Activated B cell treated with CpG ODN at 0.5 μM for 24 hours (primary cell): ENCODE measurements at regions of chr7 and their contacts with region 1.

Region 1: GRCh38 chr7:50119815-50120637 is 27.0 kb upstream of the ZPBP start:
- DNase-seq: no peak
- ATAC-seq: peak; percentile 86
- H3K4me3 Mint-ChIP-seq: no peak overlapping the region
- H3K27ac Mint-ChIP-seq: peak overlapping the region; percentile 43
- H3K4me1 Mint-ChIP-seq: peaks cover 21% of the 10 kb centered on the region
- H3K27me3 Mint-ChIP-seq: no peaks in the 10 kb centered on the region
- CTCF ChIP-seq: no peak

Region 2: DNA sequence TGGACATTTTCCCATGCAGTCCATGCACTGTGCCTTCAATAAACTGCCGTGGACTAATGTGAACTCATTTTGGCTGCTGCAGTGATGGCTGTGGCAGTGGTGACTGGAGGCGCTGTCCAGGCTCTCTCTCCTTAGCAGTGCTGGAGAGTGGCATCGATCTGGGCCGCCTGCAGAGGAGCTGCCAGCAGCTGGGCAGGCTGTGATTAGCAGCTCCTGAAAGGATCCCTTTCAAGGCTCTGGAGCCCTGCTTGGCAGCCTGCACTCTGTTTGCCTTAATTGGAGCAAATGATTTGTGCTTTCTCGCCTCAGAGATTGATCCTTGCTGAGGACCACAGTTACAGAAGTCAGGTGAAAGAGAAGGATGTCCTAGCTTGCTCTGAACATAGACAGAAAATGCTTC is 476.7 kb before region 1 on chr7:
- CTCF ChIA-PET with region 1: no interaction called
- POLR2A ChIA-PET with region 1: no interaction called
- intact Hi-C with region 1: no loop called
- DNase-seq: no peak
- ATAC-seq: no peak
- H3K4me3 Mint-ChIP-seq: no peak overlapping the region
- H3K27ac Mint-ChIP-seq: no peak overlapping the region
- H3K4me1 Mint-ChIP-seq: no peaks in the 10 kb centered on the region
- H3K27me3 Mint-ChIP-seq: no peaks in the 10 kb centered on the region
- CTCF ChIP-seq: no peak

Region 3: DNA sequence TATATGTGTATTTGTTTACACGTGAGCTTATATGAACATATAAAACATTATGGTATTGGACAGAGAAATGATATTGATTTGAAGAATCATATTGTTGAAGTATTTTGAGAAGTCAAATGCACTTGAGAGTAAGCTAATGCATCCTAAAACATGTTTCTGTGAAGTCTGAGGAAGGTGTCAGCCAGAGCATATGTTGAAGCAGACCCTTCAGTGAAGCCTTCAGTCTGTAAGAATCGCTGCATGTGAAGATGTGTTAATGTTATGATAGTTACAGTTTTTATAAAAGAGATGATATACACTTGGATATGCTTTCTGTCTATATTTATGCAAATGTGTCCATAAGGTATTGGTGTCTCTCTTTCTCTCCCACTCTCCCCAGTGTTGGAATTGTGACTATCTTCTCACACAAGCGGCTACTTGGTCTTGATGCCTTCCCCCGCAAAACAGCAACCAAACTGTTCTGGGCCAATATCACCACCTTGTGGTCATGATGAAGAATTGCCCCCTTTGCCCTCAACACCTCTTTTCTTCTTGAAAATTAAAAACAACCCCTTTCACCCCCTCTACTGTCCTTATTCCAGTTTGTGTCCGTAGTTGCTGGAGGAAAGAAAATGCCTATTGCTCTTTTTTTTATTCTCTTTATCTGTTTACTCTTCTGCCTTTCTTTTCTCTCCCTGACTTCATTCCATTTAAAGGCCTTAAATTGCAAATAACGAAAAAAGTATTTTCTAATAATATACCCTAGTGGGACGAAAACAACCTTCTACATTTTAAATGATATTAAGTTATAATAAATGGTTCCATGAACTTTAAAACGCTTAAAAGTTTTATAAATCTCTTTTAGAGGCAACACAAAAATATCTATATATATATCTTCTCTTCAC is 249.4 kb after region 1 on chr7:
- CTCF ChIA-PET with region 1: interaction called, 10 read pairs
- POLR2A ChIA-PET with region 1: no interaction called
- intact Hi-C with region 1: no loop called
- DNase-seq: no peak
- ATAC-seq: peak; percentile 66
- H3K4me3 Mint-ChIP-seq: no peak overlapping the region
- H3K27ac Mint-ChIP-seq: peak overlapping the region; percentile 74
- H3K4me1 Mint-ChIP-seq: peaks cover 94% of the 10 kb centered on the region
- H3K27me3 Mint-ChIP-seq: no peaks in the 10 kb centered on the region
- CTCF ChIP-seq: peak; percentile 50

Region 4: DNA sequence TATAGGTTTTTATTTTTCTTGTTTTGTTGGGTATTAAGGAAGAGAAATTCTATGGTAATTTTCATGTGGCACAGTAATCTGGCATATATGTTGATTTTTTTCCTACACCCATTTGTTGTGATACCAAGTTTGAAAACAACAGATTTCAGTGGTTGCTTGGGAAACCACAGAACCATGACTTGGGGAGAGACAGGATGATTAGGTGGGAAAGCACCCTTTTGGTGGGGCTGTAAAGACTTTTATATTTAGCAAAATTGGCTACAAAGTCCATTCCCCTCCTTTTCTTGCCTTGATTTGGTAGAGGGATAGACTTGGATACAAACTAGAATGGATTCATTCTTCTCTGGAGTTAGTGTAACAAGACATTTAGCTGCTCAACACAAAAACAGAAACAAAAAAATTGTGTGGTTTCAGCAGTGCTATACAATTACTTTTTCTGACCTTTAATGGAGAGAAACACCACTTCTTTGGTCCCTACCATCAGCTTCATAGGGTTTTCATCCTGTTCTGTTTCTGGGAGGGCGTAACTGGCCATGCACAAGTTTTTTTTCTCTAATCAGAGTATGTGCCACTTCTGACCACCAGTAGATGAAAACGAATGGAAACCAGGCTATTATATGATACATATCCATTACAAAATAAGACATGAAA is 277.4 kb after region 1 on chr7:
- CTCF ChIA-PET with region 1: no interaction called
- POLR2A ChIA-PET with region 1: no interaction called
- intact Hi-C with region 1: no loop called
- DNase-seq: no peak
- ATAC-seq: peak; percentile 36
- H3K4me3 Mint-ChIP-seq: peak overlapping the region; percentile 45
- H3K27ac Mint-ChIP-seq: peak overlapping the region; percentile 93
- H3K4me1 Mint-ChIP-seq: peaks cover 79% of the 10 kb centered on the region
- H3K27me3 Mint-ChIP-seq: no peaks in the 10 kb centered on the region
- CTCF ChIP-seq: no peak

Region 5: GRCh38 chr7:50632561-50633413 is 512.8 kb after region 1 on chr7:
- CTCF ChIA-PET with region 1: interaction called, 5 read pairs
- POLR2A ChIA-PET with region 1: no interaction called
- intact Hi-C with region 1: loop called (anchors 1 kb)
- DNase-seq: peak; percentile 32
- ATAC-seq: peak; percentile 79
- H3K4me3 Mint-ChIP-seq: no peak overlapping the region
- H3K27ac Mint-ChIP-seq: no peak overlapping the region
- H3K4me1 Mint-ChIP-seq: peaks cover 14% of the 10 kb centered on the region
- H3K27me3 Mint-ChIP-seq: peaks cover 20% of the 10 kb centered on the region
- CTCF ChIP-seq: no peak

Region 6: GRCh38 chr7:50679218-50680007 is 559.4 kb after region 1 on chr7:
- CTCF ChIA-PET with region 1: no interaction called
- POLR2A ChIA-PET with region 1: no interaction called
- intact Hi-C with region 1: loop called (anchors 1 kb)
- DNase-seq: no peak
- ATAC-seq: peak; percentile 42
- H3K4me3 Mint-ChIP-seq: no peak overlapping the region
- H3K27ac Mint-ChIP-seq: no peak overlapping the region
- H3K4me1 Mint-ChIP-seq: peaks cover 6% of the 10 kb centered on the region
- H3K27me3 Mint-ChIP-seq: peaks cover 5% of the 10 kb centered on the region
- CTCF ChIP-seq: no peak